ENCODE measurements at regions of chr11 and their contacts with region 1.

Region 1: GRCh38 chr11:14974515-14975251 is 2.5 kb upstream of the CALCA start:
- DNase-seq: peak; percentile 52
- H3K4me3 ChIP-seq: no peak overlapping the region
- H3K27ac ChIP-seq: no peak overlapping the region
- H3K4me1 ChIP-seq: peaks cover 3% of the 10 kb centered on the region
- H3K27me3 ChIP-seq: peaks cover 49 to 55% of the 10 kb centered on the region in 2 experiments
- CTCF ChIP-seq: peak; percentile 62 to 79
- POLR2A ChIP-seq: no peak

Region 2: DNA sequence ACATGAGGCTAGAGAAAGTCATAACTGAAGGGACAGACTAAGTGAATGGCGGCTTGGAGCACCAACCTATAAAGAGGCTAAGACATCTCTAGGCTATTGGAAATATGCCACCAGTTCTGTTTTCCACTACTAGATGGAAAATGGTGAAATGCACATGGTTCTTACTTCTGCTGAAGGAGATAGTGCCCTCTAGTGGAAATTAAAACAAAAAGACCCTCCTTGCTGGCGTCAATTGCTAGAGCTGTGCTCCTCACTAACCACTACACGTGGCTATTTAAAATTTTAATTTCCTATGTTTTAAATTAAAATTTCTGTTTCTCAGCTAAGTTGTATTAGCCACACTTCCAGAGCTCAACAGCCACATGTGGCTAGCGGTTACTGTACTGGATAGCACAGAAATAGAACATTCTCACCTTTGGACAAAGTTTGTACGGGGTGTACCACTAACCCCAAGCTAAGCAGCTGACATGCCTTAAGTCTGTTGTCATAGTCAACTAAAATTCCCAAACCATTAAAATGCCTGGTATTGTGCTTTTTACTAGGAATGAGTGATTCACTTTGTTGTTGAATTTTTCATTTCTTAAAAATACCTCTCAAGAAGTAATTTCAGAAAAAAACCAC is 31.6 kb after region 1 on chr11:
- CTCF ChIA-PET with region 1: interaction called, 28 read pairs
- POLR2A ChIA-PET with region 1: no interaction called
- dilution Hi-C with region 1: no loop called
- intact Hi-C with region 1: loop called (anchors 1 kb)
- DNase-seq: peak; percentile 42
- H3K4me3 ChIP-seq: no peak overlapping the region
- H3K27ac ChIP-seq: no peak overlapping the region
- H3K4me1 ChIP-seq: no peaks in the 10 kb centered on the region
- H3K27me3 ChIP-seq: peaks cover 0 to 2% of the 10 kb centered on the region in 2 experiments
- CTCF ChIP-seq: peak in 1 of 2 donors; percentile 46
- POLR2A ChIP-seq: no peak

Region 3: GRCh38 chr11:15074206-15075161 is 99.8 kb after region 1 on chr11:
- CTCF ChIA-PET with region 1: interaction called, 20 read pairs
- POLR2A ChIA-PET with region 1: no interaction called
- dilution Hi-C with region 1: no loop called
- intact Hi-C with region 1: loop called (anchors 1 kb)
- DNase-seq: peak; percentile 53
- H3K4me3 ChIP-seq: no peak overlapping the region
- H3K27ac ChIP-seq: no peak overlapping the region
- H3K4me1 ChIP-seq: no peaks in the 10 kb centered on the region
- H3K27me3 ChIP-seq: peaks cover 15 to 18% of the 10 kb centered on the region in 2 experiments
- CTCF ChIP-seq: peak; percentile 65 to 81
- POLR2A ChIP-seq: no peak

Region 4: GRCh38 chr11:15127341-15127740 is 152.7 kb after region 1 on chr11:
- CTCF ChIA-PET with region 1: no interaction called
- POLR2A ChIA-PET with region 1: no interaction called
- dilution Hi-C with region 1: no loop called
- intact Hi-C with region 1: no loop called
- DNase-seq: no peak
- H3K4me3 ChIP-seq: no peak overlapping the region
- H3K27ac ChIP-seq: no peak overlapping the region
- H3K4me1 ChIP-seq: no peaks in the 10 kb centered on the region
- H3K27me3 ChIP-seq: no peaks in the 10 kb centered on the region
- CTCF ChIP-seq: no peak
- POLR2A ChIP-seq: no peak

Region 5: DNA sequence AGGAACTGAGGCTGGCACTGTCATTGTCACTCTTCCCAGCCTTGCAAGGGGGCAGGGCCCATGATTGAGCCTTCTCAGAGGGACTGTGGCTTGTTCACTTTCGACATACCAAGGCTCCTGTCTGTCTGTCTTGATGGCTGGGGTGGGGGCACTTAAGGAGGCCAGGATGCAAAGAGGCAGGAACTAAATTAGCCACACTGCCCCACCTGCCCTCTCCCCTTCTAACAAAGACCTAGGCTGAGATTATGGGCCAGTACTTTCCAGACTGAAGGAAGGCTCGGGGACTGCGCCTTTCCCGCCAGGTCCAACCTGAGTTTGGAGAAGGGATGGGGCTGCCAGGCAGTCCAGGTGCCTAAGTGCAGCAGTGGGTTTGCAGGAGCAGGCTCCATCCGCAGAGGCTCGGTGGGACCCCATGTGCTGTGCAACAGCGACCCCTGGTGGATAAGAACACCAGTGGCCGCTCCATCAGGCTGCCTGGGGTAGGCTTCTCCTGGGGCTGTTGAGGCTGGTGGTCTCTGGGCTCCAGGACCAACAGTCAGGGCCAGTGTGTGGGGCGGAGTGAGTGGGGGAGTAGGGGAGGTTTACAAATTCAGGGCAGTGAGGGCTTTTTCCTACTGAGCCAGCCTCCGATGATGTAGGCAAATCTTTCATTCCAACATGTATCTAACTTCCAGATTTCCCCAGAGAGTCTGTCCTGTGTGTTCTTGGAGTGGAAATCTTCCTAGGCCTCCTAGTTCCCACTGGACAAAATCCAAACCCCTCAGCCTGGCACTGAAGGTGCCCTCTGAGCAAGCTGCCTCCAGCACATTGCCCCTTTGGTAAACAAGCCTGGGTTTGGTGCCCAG is 233.9 kb after region 1 on chr11:
- CTCF ChIA-PET with region 1: no interaction called
- POLR2A ChIA-PET with region 1: no interaction called
- dilution Hi-C with region 1: no loop called
- intact Hi-C with region 1: no loop called
- DNase-seq: peak; percentile 34
- H3K4me3 ChIP-seq: no peak overlapping the region
- H3K27ac ChIP-seq: no peak overlapping the region
- H3K4me1 ChIP-seq: no peaks in the 10 kb centered on the region
- H3K27me3 ChIP-seq: no peaks in the 10 kb centered on the region
- CTCF ChIP-seq: peak; percentile 65 to 92
- POLR2A ChIP-seq: no peak